Activated B cell treated with CpG ODN at 0.5 μM for 24 hours (primary cell): ENCODE measurements at regions of chr19 and their contacts with region 1.

Region 1: GRCh38 chr19:53365134-53365898 is at the start of gene ZNF525:
- DNase-seq: peak; percentile 98
- ATAC-seq: peak; percentile 99
- H3K4me3 Mint-ChIP-seq: peak within 1 kb of the TSS; percentile 96
- H3K27ac Mint-ChIP-seq: peak within 1 kb of the TSS; percentile 98
- H3K4me1 Mint-ChIP-seq: peaks cover 34% of the 10 kb centered on the region
- H3K27me3 Mint-ChIP-seq: no peaks in the 10 kb centered on the region
- CTCF ChIP-seq: no peak
- total RNA-seq, gene ZNF525: 28.9 and 37.4 TPM in 2 replicates

Region 2: DNA sequence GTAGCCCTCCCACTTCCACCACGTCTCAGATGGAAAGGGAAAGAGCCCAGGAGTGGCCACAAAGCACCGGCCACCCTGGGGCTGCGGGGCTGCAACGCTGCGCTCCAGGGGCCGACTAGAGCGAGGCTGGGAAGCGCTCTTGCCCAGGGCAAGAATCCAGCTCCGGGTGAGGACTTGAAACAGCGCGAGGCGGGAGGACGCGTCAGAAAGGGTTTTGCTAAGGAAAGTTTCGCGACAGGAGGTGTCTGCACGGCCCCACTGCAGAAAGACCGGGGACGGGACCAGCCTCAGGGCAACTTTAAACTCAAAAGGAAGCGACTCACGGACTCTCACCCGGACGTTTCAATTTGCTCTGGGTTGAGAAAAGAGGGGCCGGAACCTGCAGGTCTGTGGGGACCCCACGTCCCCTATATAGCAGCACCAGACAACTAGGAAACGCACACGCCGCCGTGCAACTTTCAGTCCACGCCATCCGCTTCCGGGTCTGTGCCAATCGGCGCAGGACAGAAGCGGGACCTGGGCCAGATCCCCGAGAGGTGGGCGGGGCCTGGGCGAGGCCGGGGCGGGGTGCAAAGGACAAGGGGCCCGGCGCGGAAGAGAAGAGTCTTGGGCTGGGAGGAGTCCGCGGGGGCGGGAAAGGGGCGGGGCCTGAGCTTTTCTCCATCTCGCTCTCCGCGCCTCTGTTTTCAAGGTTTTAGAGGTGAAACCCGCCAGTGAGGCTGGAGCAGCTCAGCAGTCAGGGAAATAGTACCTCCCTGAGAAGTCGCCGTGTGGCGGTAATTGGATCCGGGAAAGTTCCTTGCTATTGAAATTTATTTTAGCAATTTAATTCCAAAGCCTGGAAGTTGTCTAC is 402.7 kb before region 1 on chr19 and contains the start of gene ZNF816:
- CTCF ChIA-PET with region 1: no interaction called
- POLR2A ChIA-PET with region 1: no interaction called
- intact Hi-C with region 1: loop called (anchors 2 kb)
- DNase-seq: peak; percentile 97
- ATAC-seq: peak; percentile 99
- H3K4me3 Mint-ChIP-seq: peak within 1 kb of the TSS; percentile 94
- H3K27ac Mint-ChIP-seq: peak within 1 kb of the TSS; percentile 92
- H3K4me1 Mint-ChIP-seq: peaks cover 31% of the 10 kb centered on the region
- H3K27me3 Mint-ChIP-seq: no peaks in the 10 kb centered on the region
- CTCF ChIP-seq: no peak
- total RNA-seq, gene ZNF816: 17.0 and 18.0 TPM in 2 replicates

Region 3: GRCh38 chr19:53254411-53255341 is 110.6 kb before region 1 on chr19 and contains the start of gene ZNF677:
- CTCF ChIA-PET with region 1: no interaction called
- POLR2A ChIA-PET with region 1: interaction called, 10 read pairs
- intact Hi-C with region 1: no loop called
- DNase-seq: peak; percentile 57
- ATAC-seq: peak; percentile 99
- H3K4me3 Mint-ChIP-seq: peak within 1 kb of the TSS; percentile 87
- H3K27ac Mint-ChIP-seq: peak within 1 kb of the TSS; percentile 77
- H3K4me1 Mint-ChIP-seq: peaks cover 12% of the 10 kb centered on the region
- H3K27me3 Mint-ChIP-seq: no peaks in the 10 kb centered on the region
- CTCF ChIP-seq: no peak
- total RNA-seq, gene ZNF677: 13.7 and 14.2 TPM in 2 replicates

Region 4: DNA sequence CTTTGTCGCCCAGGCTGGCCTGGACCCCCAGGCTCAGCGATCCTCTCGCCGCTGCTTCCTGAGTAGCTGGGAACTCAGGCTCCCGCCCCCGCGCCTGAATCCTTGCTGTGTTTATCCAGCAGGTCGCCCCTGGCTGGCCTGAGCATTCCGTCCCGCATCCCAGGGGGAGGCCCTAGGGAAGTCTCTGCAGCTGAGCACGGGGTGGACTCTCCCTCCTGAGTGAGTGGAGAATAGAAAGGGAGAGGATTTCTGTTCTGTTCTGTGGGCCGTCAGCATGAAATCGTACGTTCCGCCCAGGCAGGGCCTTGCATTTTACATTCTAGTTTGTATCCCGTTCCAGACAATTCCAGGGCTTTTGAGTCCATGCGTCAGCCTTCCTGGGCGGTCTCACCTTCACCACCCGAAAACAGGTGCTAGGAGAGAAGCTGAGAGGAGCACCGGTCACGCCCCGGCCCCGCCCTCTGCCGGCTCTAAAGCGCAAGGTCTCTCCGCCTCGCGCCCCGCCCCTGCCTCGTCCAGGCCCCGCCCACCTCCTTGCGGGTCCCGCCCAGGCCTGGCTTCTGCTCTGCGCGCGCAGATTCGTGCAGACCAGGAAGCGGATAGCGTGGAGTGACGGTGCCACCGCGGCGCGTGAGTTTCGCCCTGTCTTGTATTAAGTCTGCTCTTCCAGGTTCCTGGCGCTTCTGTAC is 66.2 kb after region 1 on chr19 and contains the start of gene ZNF761:
- CTCF ChIA-PET with region 1: no interaction called
- POLR2A ChIA-PET with region 1: no interaction called
- intact Hi-C with region 1: loop called (anchors 1 kb)
- DNase-seq: peak; percentile 99
- ATAC-seq: peak; percentile 98
- H3K4me3 Mint-ChIP-seq: peak within 1 kb of the TSS; percentile 96
- H3K27ac Mint-ChIP-seq: peak within 1 kb of the TSS; percentile 94
- H3K4me1 Mint-ChIP-seq: peaks cover 34% of the 10 kb centered on the region
- H3K27me3 Mint-ChIP-seq: no peaks in the 10 kb centered on the region
- CTCF ChIP-seq: no peak
- total RNA-seq, gene ZNF761: 11.1 and 13.8 TPM in 2 replicates

Region 5: DNA sequence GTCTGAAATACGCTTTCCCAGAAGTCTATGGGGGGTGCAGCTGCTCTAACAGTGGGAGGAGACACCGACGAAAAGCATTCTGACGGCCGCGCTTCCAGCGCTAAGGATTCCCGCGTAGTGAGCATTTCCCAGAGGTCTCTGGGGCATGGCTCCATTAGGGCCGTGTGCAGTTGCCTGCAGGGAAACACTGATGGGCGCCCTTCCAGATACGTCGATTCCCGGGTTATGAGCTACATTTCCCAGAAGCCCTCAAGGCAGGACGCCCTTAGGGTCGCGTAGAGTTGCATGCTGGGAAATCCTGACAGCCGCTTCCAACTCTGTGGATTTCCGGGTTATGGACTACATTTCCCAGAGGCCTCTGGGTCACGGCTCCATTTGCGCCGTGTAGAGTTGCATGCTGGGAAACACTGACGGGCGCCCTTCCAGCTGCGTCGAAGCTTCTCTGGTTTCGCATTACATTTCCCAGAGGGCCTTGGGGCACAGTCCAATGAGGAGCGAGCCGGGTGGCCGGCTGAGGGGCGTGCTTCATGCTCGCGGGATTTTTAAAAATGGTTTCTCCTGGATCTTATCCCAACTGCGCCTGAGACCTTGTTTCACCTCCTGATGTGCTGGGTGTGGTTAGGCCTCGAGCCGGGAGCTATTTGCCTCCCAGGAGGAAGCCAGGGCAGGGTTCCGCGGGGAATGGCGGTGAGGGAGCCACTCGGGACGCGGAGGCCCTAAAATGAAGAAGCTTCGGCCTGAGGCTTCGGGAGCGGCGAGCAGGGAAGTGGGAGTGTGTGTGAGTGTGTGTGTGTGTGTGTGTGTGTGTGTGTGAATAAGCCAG is 155.4 kb after region 1 on chr19:
- CTCF ChIA-PET with region 1: no interaction called
- POLR2A ChIA-PET with region 1: no interaction called
- intact Hi-C with region 1: loop called (anchors 1 kb)
- DNase-seq: peak; percentile 71
- ATAC-seq: peak; percentile 97
- H3K4me3 Mint-ChIP-seq: peak overlapping the region; percentile 94
- H3K27ac Mint-ChIP-seq: peak overlapping the region; percentile 87
- H3K4me1 Mint-ChIP-seq: peaks cover 16% of the 10 kb centered on the region
- H3K27me3 Mint-ChIP-seq: no peaks in the 10 kb centered on the region
- CTCF ChIP-seq: no peak